ENCODE measurements at regions of chr19 and their contacts with region 1.

Region 1: GRCh38 chr19:13033819-13034611 is 38.7 kb downstream of the NFIX start:
- DNase-seq: peak; percentile 82 to 92 (median 88)
- ATAC-seq: peak; percentile 43 to 64 (median 58)
- H3K4me3 ChIP-seq: no peak overlapping the region
- H3K27ac ChIP-seq: peak overlapping the region; percentile 37 to 89 (median 78)
- H3K4me1 ChIP-seq: peaks cover 17 to 100% (median 96%) of the 10 kb centered on the region in 12 donors
- H3K27me3 ChIP-seq: no peaks in the 10 kb centered on the region
- CTCF ChIP-seq: peak; percentile 61 to 85 (median 78)
- POLR2A ChIP-seq: no peak

Region 2: DNA sequence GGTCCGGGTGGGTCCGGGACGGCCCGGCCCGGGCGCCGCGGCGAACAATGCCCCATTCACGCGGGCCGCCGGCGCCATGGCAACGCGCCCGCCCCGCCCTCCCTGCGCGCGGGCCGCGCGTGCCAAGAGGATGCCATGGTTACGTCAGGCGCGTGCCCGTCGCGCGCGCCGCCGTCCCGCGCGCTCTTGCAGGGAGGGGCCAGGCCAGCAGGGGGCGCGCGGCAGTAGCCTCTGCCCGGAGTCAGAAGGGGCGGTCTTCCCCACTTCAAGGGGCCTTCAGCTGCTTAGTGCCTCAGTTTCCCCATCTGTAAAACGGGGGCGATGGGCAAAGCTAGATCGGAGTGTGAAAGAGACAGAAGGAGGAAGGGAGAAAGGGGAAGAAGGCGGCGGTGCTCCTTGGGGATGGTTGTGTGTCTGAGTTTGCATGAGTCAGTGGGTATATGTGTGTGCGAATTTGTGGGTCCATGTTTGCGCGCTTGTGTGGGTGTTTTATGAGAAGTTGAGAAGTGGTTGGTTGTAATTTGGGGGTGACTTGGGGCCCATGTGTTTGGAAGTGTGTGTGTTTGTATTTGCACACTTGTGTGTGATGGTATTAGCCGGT is 50.4 kb before region 1 on chr19:
- intact Hi-C with region 1: loop called in 9 of 10 experiments (anchors 2 to 10 kb)
- DNase-seq: peak; percentile 73 to 92 (median 83)
- ATAC-seq: peak; percentile 30 to 83 (median 78)
- H3K4me3 ChIP-seq: peak overlapping the region in 10 of 12 donors; percentile 26 to 50 (median 42)
- H3K27ac ChIP-seq: peak overlapping the region in 1 of 12 donors; percentile 47
- H3K4me1 ChIP-seq: peaks cover 0 to 28% (median 15%) of the 10 kb centered on the region in 12 donors
- H3K27me3 ChIP-seq: peaks cover 0 to 5% (median 0%) of the 10 kb centered on the region in 9 donors
- CTCF ChIP-seq: peak; percentile 76 to 99 (median 97)
- POLR2A ChIP-seq: peak in 1 of 2 donors; percentile 27

Region 3: DNA sequence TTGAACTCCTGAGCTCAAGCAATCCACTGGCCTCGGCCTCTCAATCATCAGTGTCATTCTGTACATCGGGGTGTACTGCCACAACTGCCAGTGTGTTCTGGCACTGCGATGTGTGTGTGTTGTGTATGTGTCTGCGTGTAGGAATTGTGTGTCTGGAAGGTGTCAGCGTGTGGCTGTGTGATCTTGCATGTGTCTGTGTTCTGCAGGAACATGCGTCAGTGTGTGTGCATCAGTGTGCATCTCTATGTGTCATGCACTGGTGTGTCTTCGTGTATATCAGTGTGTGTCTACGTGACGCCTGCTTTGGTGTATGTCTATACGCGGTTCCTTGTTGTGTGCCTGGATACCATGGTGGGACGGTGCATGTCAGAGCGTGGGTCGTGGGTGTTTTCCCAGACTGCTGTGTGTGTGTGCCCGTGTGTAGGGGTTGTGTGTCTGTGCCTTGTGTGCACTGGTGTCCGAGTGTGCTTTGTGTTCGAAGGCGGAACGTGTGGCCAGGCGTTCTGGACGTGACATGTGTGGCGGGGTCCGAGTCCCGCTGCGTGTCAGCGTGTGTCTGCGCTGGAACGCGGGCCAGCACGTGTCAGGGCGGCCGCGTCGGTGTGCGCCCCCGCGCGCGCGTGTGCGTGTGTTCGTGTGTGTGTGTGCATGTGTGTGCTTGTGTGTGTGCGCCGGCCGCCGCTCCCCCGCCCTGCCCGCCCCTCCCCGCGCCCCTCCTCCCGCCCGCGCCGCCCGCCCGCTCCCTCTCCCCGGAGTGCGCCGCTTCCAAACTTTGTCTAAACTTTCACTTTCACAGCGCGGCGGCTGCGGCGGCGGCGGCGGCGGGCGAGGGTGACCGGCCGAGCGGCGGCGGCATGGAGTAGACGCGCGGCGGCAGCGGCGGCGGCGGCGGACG is 39.1 kb before region 1 on chr19 and contains the start of gene NFIX:
- intact Hi-C with region 1: loop called in 5 of 10 experiments (anchors 5 kb)
- DNase-seq: peak; percentile 73 to 83 (median 82)
- ATAC-seq: peak; percentile 10 to 47 (median 41)
- H3K4me3 ChIP-seq: peak within 1 kb of the TSS; percentile 72 to 90 (median 80)
- H3K27ac ChIP-seq: peak within 1 kb of the TSS; percentile 53 to 97 (median 88)
- H3K4me1 ChIP-seq: peaks cover 0 to 27% (median 16%) of the 10 kb centered on the region in 12 donors
- H3K27me3 ChIP-seq: peaks cover 0 to 5% (median 0%) of the 10 kb centered on the region in 9 donors
- CTCF ChIP-seq: peak in 1 of 12 donors; percentile 8
- POLR2A ChIP-seq: no peak
- total RNA-seq, gene NFIX: 81.4 to 147 (median 122) TPM

Region 4: DNA sequence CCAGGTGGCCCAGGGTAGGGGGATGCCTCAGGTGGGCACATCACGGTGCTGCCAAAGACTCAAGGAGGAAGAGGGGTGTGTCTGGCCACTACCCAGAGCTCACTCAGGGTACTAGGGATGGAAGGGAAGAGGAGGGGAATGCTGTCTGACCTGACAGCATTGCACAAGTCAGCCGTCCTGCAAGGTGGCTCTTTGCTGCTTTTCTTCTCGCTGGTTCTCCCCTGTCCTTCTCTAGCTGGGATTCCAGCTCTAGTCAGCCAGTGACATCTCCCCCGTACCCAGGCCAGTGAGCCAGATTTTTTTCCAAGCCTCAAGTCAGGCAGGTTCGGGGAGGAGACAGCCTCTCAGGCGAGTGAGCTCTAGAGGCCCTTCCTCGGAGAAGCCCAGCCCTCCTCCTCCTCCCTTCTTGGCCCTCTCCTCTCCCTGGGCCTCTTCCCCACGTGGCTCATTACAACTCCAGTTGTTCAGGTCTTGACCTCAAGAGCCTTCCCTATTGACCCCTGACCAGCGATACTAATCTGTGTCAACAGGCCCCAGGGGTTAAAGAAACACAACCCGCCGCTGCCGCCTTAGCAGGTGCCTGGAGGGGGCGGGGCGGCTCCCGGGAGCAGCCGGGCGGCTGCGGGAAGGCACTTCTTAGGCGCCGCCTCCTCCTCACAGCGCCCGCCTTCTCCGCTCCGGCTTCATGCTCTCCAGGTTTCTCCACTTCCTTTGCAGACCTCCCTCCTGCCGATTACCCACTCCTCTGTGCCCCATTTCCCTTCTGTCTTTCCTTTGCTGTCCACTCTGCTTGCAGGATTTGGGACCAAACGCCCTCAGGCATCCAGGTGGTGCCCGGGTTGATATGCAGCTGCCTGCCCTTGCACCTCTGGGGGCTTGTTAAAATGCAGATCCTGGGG is 17.5 kb after region 1 on chr19:
- intact Hi-C with region 1: loop called in 2 of 10 experiments (anchors 2 kb)
- DNase-seq: peak in 4 of 5 donors; percentile 71 to 81 (median 72)
- ATAC-seq: peak in 2 of 4 donors; percentile 7 to 22
- H3K4me3 ChIP-seq: peak overlapping the region in 5 of 12 donors; percentile 5 to 33 (median 20)
- H3K27ac ChIP-seq: peak overlapping the region in 11 of 12 donors; percentile 90 to 99 (median 97)
- H3K4me1 ChIP-seq: peaks cover 29 to 94% (median 81%) of the 10 kb centered on the region in 12 donors
- H3K27me3 ChIP-seq: no peaks in the 10 kb centered on the region
- CTCF ChIP-seq: no peak
- POLR2A ChIP-seq: no peak

Region 5: DNA sequence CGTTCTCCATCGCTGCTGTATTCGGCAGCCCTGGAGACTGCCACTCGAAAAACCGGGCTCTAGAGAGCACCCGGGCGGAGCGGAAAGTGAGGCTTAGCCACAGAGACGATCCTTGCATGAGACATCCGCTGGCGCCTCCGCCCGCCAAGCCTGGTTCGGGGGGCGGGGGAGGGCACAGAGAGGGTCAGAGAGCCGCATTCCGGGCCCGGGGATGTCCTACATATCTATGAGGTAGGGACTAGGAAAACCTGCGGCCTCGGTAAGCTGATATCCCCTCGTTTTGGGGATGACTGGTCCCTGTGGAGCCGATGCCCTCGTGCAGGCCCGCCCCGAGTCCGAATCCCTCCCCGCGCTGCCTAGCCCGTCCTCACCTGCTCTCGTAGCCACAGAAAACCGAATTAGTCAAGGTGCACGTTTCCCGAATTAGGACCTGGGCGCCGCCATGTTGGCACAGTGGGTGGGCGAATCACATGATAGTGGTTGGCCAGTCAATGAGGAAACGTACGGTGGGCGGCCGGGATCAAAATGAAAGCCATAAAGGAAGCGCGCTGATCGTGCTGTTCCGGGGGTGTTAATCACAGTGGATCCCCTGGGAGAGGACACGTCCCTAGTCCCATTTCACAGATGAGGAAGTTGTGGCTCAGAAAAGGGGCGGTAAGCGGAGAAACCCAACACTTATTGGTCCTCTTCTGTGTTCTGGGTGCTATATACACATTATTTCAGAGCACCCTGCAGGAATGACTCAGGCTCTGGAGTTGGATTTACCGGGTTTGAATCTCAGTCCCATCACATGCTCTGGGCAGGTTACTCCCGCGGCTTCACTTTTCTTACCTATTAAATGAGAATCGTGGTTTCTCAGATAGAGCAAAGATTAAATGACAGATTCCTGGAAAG is 82.5 kb after region 1 on chr19 and contains the start of gene TRMT1:
- intact Hi-C with region 1: no loop called
- DNase-seq: peak; percentile 93 to 95 (median 94)
- ATAC-seq: peak; percentile 76 to 91 (median 80)
- H3K4me3 ChIP-seq: peak within 1 kb of the TSS; percentile 72 to 99 (median 92)
- H3K27ac ChIP-seq: peak within 1 kb of the TSS; percentile 10 to 88 (median 74)
- H3K4me1 ChIP-seq: peaks cover 5 to 49% (median 35%) of the 10 kb centered on the region in 12 donors
- H3K27me3 ChIP-seq: no peaks in the 10 kb centered on the region
- CTCF ChIP-seq: no peak
- POLR2A ChIP-seq: no peak
- total RNA-seq, gene TRMT1: 15.1 to 22.6 (median 16.2) TPM